Dorsolateral prefrontal cortex (tissue), 120 donors: ENCODE measurements at regions of chr2 and their contacts with region 1.

Region 1: GRCh38 chr2:97995734-97996624 is at the start of gene TMEM131:
- DNase-seq: peak; percentile 83 to 97 (median 91)
- H3K4me3 ChIP-seq: peak within 1 kb of the TSS; percentile 66 to 98 (median 89)
- H3K27ac ChIP-seq: peak within 1 kb of the TSS; percentile 87 to 100 (median 98)
- H3K27me3 ChIP-seq: no peaks in the 10 kb centered on the region
- CTCF ChIP-seq: peak in 15 of 56 donors; percentile 8 to 50 (median 23)
- total RNA-seq, gene TMEM131: 31.4 to 58.3 (median 45.6) TPM

Region 2: DNA sequence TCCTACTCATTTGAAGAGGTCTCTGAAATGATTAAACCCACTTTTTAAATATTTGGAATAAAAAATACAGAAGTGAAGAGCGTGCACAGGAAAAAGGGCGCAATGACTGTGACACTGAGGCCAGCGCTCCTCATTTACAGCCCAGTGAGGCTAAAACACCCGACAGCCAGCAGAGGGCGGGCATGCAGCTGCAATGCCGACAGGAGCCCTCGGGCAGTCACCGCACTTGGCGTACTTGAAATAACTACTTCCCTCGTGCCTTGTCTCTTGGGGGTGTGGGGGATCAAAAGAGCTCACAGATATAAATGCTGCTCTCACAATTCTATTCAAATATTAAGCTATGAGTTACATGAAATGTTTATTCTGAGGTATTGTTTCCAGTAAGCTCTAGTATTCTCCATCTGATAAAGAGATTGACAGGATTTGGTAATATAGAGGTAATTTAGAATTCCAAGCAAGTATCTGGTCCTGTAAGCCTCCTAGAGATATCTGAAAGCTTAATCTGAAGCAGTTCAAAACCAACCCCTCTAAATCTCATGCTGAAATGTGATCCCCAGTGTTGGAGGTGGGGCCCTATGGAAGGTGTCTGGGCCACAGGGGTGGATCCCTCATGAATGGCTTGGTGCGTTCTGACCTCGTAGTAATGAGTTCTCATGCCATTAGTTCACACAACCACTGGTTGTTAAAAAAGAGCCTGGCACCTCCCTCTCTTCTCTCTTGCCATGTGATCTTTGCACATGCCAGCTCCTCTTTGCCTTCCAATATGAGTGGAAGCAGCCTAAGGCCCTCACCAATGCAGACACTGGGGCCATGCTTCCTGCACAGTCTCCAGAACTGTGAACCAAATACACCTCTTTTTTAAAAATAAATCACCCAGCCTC is 189.0 kb before region 1 on chr2:
- intact Hi-C with region 1: loop called (anchors 5 kb)
- DNase-seq: peak; percentile 78 to 88 (median 83)
- H3K4me3 ChIP-seq: no peak overlapping the region
- H3K27ac ChIP-seq: peak overlapping the region in 2 of 59 donors; percentile 20 to 36
- H3K27me3 ChIP-seq: no peaks in the 10 kb centered on the region
- CTCF ChIP-seq: peak; percentile 64 to 99 (median 93)

Region 3: GRCh38 chr2:97900806-97901205 is 95.2 kb before region 1 on chr2:
- intact Hi-C with region 1: no loop called
- DNase-seq: no peak
- H3K4me3 ChIP-seq: no peak overlapping the region
- H3K27ac ChIP-seq: no peak overlapping the region
- H3K27me3 ChIP-seq: no peaks in the 10 kb centered on the region
- CTCF ChIP-seq: no peak

Region 4: GRCh38 chr2:98157557-98157956 is 161.6 kb after region 1 on chr2:
- intact Hi-C with region 1: loop called in 1 of 2 experiments (anchors 5 kb)
- DNase-seq: no peak
- H3K4me3 ChIP-seq: no peak overlapping the region
- H3K27ac ChIP-seq: peak overlapping the region in 4 of 59 donors; percentile 3 to 52 (median 21)
- H3K27me3 ChIP-seq: no peaks in the 10 kb centered on the region
- CTCF ChIP-seq: no peak

Region 5: DNA sequence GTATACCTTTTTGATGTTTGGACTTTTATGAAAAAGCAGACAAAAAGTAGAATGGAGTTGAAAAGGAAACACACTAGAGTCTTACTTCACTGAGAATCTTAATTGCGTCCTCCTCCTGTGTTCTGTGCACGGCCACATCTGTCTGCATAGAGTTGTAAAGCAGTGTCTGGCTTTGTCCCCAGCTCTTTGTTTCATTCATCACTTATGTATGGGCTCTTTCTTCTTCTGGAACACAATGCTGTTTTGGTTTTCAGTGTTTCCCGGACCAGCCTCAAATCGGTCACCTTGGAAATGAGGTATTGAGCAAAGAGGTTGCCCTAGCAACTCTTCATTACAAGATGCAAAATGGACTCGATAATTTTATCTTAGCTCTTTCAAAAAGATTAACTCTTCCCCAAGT is 246.0 kb after region 1 on chr2:
- intact Hi-C with region 1: loop called in 1 of 2 experiments (anchors 10 kb)
- DNase-seq: peak in 4 of 10 donors; percentile 36 to 68 (median 48)
- H3K4me3 ChIP-seq: peak overlapping the region in 40 of 59 donors; percentile 0 to 52 (median 26)
- H3K27ac ChIP-seq: peak overlapping the region in 52 of 59 donors; percentile 3 to 87 (median 66)
- H3K27me3 ChIP-seq: no peaks in the 10 kb centered on the region
- CTCF ChIP-seq: peak in 8 of 56 donors; percentile 4 to 47 (median 18)